AG04450 (cell line): ENCODE measurements at regions of chr4 and their contacts with region 1.

Region 1: GRCh38 chr4:54714631-54715030 is 56.9 kb downstream of the KIT start:
- DNase-seq: no peak
- H3K4me3 ChIP-seq: no peak overlapping the region
- H3K27ac ChIP-seq: no peak overlapping the region
- H3K27me3 ChIP-seq: no peaks in the 10 kb centered on the region
- CTCF ChIP-seq: no peak

Region 2: DNA sequence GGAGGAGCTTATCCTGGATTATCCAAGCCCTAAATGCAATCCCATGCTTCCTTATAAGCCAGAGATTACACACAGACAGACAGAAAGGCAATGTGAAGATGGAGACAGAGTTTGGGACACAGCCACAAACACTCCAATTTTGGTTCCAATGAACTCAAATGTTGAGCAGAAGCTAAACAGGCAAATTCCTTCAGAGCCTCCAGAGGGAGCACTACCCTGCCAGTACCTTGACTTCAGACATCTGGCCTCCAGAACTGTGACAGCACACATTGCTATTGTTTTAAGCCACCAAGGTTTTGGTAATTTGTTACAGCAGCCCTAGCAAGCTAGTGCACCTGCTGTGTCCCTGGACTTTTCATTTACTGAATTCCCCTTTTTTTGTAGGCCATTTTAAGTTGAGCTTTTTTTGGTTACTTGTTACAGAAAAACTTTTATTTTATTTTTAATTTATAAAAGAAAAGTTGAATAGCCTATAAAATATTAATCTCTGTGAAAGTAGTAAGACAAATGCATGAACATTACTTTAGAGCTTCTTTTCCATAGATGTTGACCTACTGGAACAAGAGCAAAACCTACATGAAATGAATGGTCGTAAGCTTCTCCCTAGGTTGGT is 598.0 kb after region 1 on chr4:
- CTCF ChIA-PET with region 1: interaction called, 16 read pairs
- POLR2A ChIA-PET with region 1: no interaction called
- DNase-seq: no peak
- H3K4me3 ChIP-seq: no peak overlapping the region
- H3K27ac ChIP-seq: no peak overlapping the region
- H3K27me3 ChIP-seq: peaks cover 2% of the 10 kb centered on the region
- CTCF ChIP-seq: peak; percentile 86